ENCODE measurements at regions of chr10 and their contacts with region 1.

Region 1: GRCh38 chr10:119750391-119751230 is 24.8 kb downstream of the INPP5F start:
- DNase-seq: peak; percentile 75
- H3K4me3 ChIP-seq: peak overlapping the region in 1 of 2 experiments; percentile 34; a peak in 1 of 4 replicates
- H3K27ac ChIP-seq: peak overlapping the region in 1 of 2 experiments; percentile 7; a peak in 1 of 4 replicates
- H3K4me1 ChIP-seq: peaks cover 0 to 7% of the 10 kb centered on the region in 2 experiments; a peak in 2 of 4 replicates
- H3K27me3 ChIP-seq: no peaks in the 10 kb centered on the region
- CTCF ChIP-seq: peak; percentile 93
- EP300 ChIP-seq: no peak
- RAD21 ChIP-seq: peak; percentile 98

Region 2: DNA sequence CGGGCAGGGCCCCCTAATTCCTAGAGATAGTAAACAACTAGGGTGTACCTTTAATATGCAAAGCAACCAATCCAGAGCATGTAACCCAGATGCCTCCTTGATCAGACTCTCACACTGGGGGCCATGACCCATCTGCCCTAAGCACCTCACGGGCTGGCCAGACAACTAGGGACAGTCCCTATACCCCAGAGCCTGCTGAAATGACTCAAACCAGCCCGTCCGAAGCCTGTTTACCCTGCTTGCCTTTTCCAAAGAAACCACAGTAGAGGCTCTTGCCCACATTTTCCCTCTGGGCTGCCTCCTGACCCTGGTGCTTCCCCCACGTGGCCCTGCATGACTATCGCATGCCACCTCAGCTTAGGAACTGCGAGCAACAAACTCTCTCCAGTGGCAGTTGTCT is 254.3 kb before region 1 on chr10:
- CTCF ChIA-PET with region 1: no interaction called
- POLR2A ChIA-PET with region 1: no interaction called
- DNase-seq: no peak
- H3K4me3 ChIP-seq: no peak overlapping the region
- H3K27ac ChIP-seq: no peak overlapping the region
- H3K4me1 ChIP-seq: no peaks in the 10 kb centered on the region
- H3K27me3 ChIP-seq: no peaks in the 10 kb centered on the region
- CTCF ChIP-seq: no peak
- EP300 ChIP-seq: no peak
- RAD21 ChIP-seq: no peak

Region 3: GRCh38 chr10:119667562-119668328 is 82.9 kb before region 1 on chr10:
- CTCF ChIA-PET with region 1: no interaction called
- POLR2A ChIA-PET with region 1: no interaction called
- DNase-seq: peak; percentile 46
- H3K4me3 ChIP-seq: peak overlapping the region in 1 of 2 experiments; percentile 42; a peak in 1 of 4 replicates
- H3K27ac ChIP-seq: peak overlapping the region; percentile 64 to 92
- H3K4me1 ChIP-seq: peaks cover 17 to 67% of the 10 kb centered on the region in 2 experiments; a peak in 3 of 4 replicates
- H3K27me3 ChIP-seq: no peaks in the 10 kb centered on the region
- CTCF ChIP-seq: peak; percentile 36
- EP300 ChIP-seq: peak in 1 of 2 experiments; percentile 68; a peak in 1 of 4 replicates
- RAD21 ChIP-seq: no peak

Region 4: GRCh38 chr10:119686439-119687191 is 64.0 kb before region 1 on chr10:
- CTCF ChIA-PET with region 1: interaction called, 46 read pairs
- POLR2A ChIA-PET with region 1: no interaction called
- DNase-seq: peak; percentile 81
- H3K4me3 ChIP-seq: peak overlapping the region; percentile 27 to 36; a peak in 3 of 4 replicates
- H3K27ac ChIP-seq: peak overlapping the region in 1 of 2 experiments; percentile 87; a peak in 2 of 4 replicates
- H3K4me1 ChIP-seq: peaks cover 0 to 11% of the 10 kb centered on the region in 2 experiments; a peak in 1 of 4 replicates
- H3K27me3 ChIP-seq: no peaks in the 10 kb centered on the region
- CTCF ChIP-seq: peak; percentile 97
- EP300 ChIP-seq: peak; percentile 7 to 63; a peak in 1 of 4 replicates
- RAD21 ChIP-seq: peak; percentile 88

Region 5: GRCh38 chr10:119725828-119726675 is 24.6 kb before region 1 on chr10 and contains the start of gene INPP5F:
- CTCF ChIA-PET with region 1: interaction called, 12 read pairs
- POLR2A ChIA-PET with region 1: no interaction called
- DNase-seq: peak; percentile 100
- H3K4me3 ChIP-seq: peak within 1 kb of the TSS; percentile 78 to 87
- H3K27ac ChIP-seq: peak within 1 kb of the TSS; percentile 76 to 85
- H3K4me1 ChIP-seq: peaks cover 9 to 23% of the 10 kb centered on the region in 2 experiments; a peak in 3 of 4 replicates
- H3K27me3 ChIP-seq: no peaks in the 10 kb centered on the region
- CTCF ChIP-seq: peak; percentile 31
- EP300 ChIP-seq: no peak; a peak in 1 of 4 replicates
- RAD21 ChIP-seq: no peak
- polyA plus RNA-seq, gene INPP5F: 7.8 and 9.3 TPM in 2 replicates

Region 6: GRCh38 chr10:119761106-119761505 is 10.5 kb after region 1 on chr10:
- CTCF ChIA-PET with region 1: interaction called, 40 read pairs
- POLR2A ChIA-PET with region 1: no interaction called
- DNase-seq: no peak
- H3K4me3 ChIP-seq: peak overlapping the region in 1 of 2 experiments; percentile 26; a peak in 1 of 4 replicates
- H3K27ac ChIP-seq: peak overlapping the region; percentile 53 to 73; a peak in 3 of 4 replicates
- H3K4me1 ChIP-seq: peaks cover 0 to 27% of the 10 kb centered on the region in 2 experiments; a peak in 1 of 4 replicates
- H3K27me3 ChIP-seq: no peaks in the 10 kb centered on the region
- CTCF ChIP-seq: no peak
- EP300 ChIP-seq: no peak; a peak in 1 of 4 replicates
- RAD21 ChIP-seq: no peak

Region 7: GRCh38 chr10:119784340-119785070 is 33.9 kb after region 1 on chr10:
- CTCF ChIA-PET with region 1: interaction called, 13 read pairs
- POLR2A ChIA-PET with region 1: no interaction called
- DNase-seq: no peak
- H3K4me3 ChIP-seq: no peak overlapping the region
- H3K27ac ChIP-seq: no peak overlapping the region
- H3K4me1 ChIP-seq: peaks cover 0 to 6% of the 10 kb centered on the region in 2 experiments; a peak in 3 of 4 replicates
- H3K27me3 ChIP-seq: no peaks in the 10 kb centered on the region
- CTCF ChIP-seq: no peak
- EP300 ChIP-seq: no peak
- RAD21 ChIP-seq: no peak

Region 8: GRCh38 chr10:119859420-119860258 is 109.0 kb after region 1 on chr10:
- CTCF ChIA-PET with region 1: interaction called, 156 read pairs
- POLR2A ChIA-PET with region 1: no interaction called
- DNase-seq: peak; percentile 15
- H3K4me3 ChIP-seq: peak overlapping the region in 1 of 2 experiments; percentile 3; a peak in 1 of 4 replicates
- H3K27ac ChIP-seq: peak overlapping the region in 1 of 2 experiments; percentile 6; a peak in 1 of 4 replicates
- H3K4me1 ChIP-seq: peaks cover 0 to 5% of the 10 kb centered on the region in 2 experiments; a peak in 1 of 4 replicates
- H3K27me3 ChIP-seq: no peaks in the 10 kb centered on the region
- CTCF ChIP-seq: peak; percentile 78
- EP300 ChIP-seq: no peak
- RAD21 ChIP-seq: peak; percentile 72

Region 9: DNA sequence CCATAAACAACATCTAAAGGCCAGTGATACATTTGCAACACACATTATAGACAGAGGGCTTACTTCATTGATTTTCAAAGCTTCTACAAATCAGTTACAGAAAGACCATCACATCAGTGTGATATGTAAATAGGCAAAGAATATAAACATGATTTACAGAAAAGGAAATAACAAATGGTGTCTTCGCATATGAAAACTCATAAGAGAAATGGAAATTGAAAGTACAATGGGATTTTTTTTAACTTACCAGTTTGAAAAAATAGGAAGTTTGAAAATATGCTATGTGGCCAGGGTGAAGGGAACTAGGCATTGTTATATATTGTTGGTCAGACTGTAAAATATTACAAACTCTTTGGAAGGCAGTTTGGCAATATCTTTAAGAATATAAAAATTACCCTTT is 169.2 kb after region 1 on chr10:
- CTCF ChIA-PET with region 1: interaction called, 11 read pairs
- POLR2A ChIA-PET with region 1: no interaction called
- DNase-seq: no peak
- H3K4me3 ChIP-seq: no peak overlapping the region
- H3K27ac ChIP-seq: no peak overlapping the region
- H3K4me1 ChIP-seq: no peaks in the 10 kb centered on the region
- H3K27me3 ChIP-seq: no peaks in the 10 kb centered on the region
- CTCF ChIP-seq: no peak
- EP300 ChIP-seq: no peak
- RAD21 ChIP-seq: no peak